ENCODE measurements at regions of chr11 and their contacts with region 1.

Region 1: DNA sequence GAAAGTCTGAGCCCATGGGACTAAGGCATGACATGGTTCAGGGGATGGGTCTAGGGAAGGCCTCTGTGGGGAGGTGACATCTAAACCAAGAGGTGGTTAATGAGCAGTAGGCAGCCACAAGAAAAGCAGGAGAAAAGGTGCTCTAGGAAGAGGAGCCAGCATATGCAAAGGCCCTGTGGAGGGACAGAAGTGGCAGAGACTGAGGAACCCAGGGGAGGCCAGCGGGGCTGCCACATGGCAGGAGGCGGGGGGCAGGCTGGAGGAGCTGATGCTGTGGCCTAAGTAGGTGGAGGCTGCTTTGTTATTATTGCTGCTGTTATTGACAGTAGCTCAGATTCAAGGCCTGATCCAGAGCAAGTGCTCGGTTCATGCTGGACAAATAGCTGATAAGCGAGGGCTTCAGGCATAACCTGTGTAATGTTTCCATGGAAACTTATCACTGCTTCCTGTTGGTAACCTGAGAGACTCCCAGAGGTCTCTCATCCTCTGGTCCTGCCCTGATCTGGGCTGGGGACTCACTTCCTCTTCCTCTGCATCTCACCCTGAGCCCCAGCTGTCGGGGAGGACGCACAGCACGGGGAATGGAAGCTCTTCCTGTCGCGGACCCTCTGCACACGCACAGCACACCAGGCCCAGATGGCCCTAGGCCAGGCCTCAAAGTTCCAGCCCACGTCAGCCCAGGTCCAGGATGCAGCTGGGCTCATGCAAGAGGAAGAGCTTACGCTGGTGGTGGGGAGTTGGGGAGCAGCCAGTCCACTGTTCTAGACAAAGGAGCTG is 75.2 kb upstream of the TP53I11 start:
- DNase-seq: no peak

Region 2: DNA sequence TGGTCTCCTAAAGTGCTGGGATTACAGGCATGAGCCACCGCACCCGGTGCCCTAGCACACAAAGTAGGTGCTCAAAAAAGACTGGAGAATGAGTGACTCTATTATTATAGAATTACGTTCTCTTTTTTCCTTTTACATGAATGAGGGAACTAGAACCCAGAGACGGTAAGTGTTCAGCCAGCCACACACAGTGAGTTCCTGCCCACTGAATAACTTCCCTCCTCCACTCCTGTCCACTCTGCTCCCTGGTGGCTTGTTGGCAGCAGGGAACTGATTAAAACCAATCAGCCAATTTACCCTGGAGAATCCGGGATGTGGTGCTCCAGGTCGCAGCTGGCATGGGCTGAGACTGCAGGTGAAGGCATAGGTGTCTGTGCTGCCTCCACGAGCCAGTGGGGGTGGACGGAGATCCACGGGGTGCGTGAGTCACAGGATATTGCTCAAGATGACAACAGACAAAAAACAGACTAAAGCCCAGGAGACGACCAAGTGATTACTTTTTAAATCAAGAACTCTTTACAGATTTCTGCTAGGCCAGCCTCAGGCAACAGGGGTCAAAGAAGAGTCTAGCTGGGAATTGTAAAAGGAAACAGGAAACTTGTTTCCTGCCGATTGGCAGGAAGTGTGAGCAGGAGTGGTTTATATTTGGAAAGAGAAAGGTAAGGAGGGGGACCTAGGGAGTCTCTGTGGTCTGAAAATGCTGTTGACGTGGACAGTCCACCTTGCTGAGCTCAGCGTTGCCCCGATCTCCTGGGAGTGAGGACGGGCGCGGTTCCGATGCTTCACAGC is 20.0 kb after region 1 on chr11:
- intact Hi-C with region 1: loop called (anchors 2 kb)
- DNase-seq: peak; percentile 87

Measured in cardiac septum (tissue), 1 donor.